AG04450 (cell line): ENCODE measurements at regions of chr12 and their contacts with region 1.

Region 1: GRCh38 chr12:32755654-32756475 is at the start of gene YARS2:
- DNase-seq: peak; percentile 96
- H3K4me3 ChIP-seq: peak within 1 kb of the TSS; percentile 75
- H3K27ac ChIP-seq: peak within 1 kb of the TSS; percentile 91
- H3K27me3 ChIP-seq: no peaks in the 10 kb centered on the region
- CTCF ChIP-seq: peak; percentile 83
- polyA plus RNA-seq, gene YARS2: 20.5 and 27.3 TPM in 2 replicates

Region 2: DNA sequence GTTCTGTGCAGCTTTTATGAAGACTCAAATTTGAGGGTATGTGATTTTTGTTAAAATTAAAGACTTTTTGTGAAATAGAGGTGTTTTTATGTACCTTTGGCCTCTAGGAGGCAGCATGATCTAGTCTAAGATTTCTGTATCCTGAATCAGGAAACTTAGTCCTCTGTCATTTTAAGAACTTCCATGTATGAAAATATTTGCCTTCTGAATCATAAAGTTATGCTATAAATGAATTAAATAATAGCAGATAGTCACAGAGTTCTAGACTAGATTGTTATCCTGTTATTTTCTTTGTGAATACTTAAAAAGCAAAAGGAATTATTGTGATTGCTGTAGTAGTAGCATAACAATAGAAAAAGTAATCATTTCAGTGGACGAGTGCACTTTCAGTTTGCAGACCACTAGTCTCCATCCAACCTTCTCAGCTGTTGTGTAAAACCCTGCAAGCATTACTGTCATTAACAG is 300.2 kb before region 1 on chr12:
- CTCF ChIA-PET with region 1: interaction called, 20 read pairs
- POLR2A ChIA-PET with region 1: no interaction called
- DNase-seq: peak; percentile 33
- H3K4me3 ChIP-seq: peak overlapping the region; percentile 46
- H3K27ac ChIP-seq: no peak overlapping the region
- H3K27me3 ChIP-seq: no peaks in the 10 kb centered on the region
- CTCF ChIP-seq: peak; percentile 66

Region 3: GRCh38 chr12:32780071-32780470 is 24.2 kb after region 1 on chr12:
- CTCF ChIA-PET with region 1: interaction called, 11 read pairs
- POLR2A ChIA-PET with region 1: no interaction called
- DNase-seq: no peak
- H3K4me3 ChIP-seq: no peak overlapping the region
- H3K27ac ChIP-seq: no peak overlapping the region
- H3K27me3 ChIP-seq: no peaks in the 10 kb centered on the region
- CTCF ChIP-seq: no peak

Region 4: GRCh38 chr12:34022079-34022830 is 1266.4 kb after region 1 on chr12 and contains the start of gene ALG10:
- CTCF ChIA-PET with region 1: interaction called, 174 read pairs
- POLR2A ChIA-PET with region 1: interaction called, 28 read pairs
- DNase-seq: peak; percentile 97
- H3K4me3 ChIP-seq: peak within 1 kb of the TSS; percentile 79
- H3K27ac ChIP-seq: peak within 1 kb of the TSS; percentile 58
- H3K27me3 ChIP-seq: no peaks in the 10 kb centered on the region
- CTCF ChIP-seq: peak; percentile 73
- polyA plus RNA-seq, gene ALG10: 4.9 and 5.2 TPM in 2 replicates